Gastrocnemius medialis (tissue), 4 donors: ENCODE measurements at regions of chr7 and their contacts with region 1.

Region 1: GRCh38 chr7:21507626-21508343 is 35.1 kb upstream of the DNAH11 start:
- DNase-seq: no peak
- ATAC-seq: peak in 1 of 2 donors; percentile 75
- H3K4me3 ChIP-seq: no peak overlapping the region
- H3K27ac ChIP-seq: no peak overlapping the region
- H3K4me1 ChIP-seq: no peaks in the 10 kb centered on the region
- H3K27me3 ChIP-seq: no peaks in the 10 kb centered on the region
- CTCF ChIP-seq: peak; percentile 58 to 78 (median 66)
- POLR2A ChIP-seq: no peak

Region 2: DNA sequence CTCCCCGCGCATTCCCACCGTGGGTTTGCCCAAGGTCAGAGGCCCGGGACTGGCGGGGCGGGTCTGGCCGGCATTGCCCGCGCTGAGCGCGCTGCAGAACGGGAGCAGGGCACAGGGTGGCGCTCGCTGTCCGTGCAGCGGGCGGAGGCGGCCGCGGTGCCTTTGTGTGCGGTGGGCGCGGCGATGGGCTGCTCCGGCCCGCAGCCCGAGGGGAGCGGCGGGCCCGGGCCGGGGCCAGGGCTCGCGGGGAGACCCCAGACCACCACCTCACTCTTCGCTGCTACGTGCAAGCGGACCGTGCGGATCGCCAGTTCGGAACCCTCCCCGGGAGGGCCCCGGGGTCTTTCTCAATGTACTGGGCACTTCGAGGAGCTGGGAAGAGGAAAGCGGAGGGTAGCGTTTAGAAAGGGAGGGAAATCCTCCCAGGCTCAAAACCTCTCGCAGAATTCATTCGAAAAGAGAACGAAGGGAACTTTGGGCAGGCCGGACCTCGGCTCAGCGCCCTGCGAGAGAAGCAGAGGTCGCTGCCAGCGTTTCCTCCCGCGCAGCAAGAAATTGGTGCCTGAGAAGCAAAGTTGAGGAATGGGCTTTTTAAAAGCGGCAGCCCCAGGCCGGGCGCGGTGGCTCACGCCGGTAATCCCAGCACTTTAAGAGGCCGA is 729.6 kb before region 1 on chr7:
- in situ Hi-C with region 1: no loop called
- intact Hi-C with region 1: loop called (anchors 10 kb)
- DNase-seq: no peak
- ATAC-seq: peak in 1 of 2 donors; percentile 66
- H3K4me3 ChIP-seq: peak overlapping the region in 2 of 4 donors; percentile 24 to 32
- H3K27ac ChIP-seq: no peak overlapping the region
- H3K4me1 ChIP-seq: peaks cover 0 to 2% of the 10 kb centered on the region in 2 donors
- H3K27me3 ChIP-seq: peaks cover 82 to 97% (median 95%) of the 10 kb centered on the region in 3 donors
- CTCF ChIP-seq: peak in 3 of 5 experiments; percentile 20 to 60 (median 35)
- POLR2A ChIP-seq: no peak

Region 3: DNA sequence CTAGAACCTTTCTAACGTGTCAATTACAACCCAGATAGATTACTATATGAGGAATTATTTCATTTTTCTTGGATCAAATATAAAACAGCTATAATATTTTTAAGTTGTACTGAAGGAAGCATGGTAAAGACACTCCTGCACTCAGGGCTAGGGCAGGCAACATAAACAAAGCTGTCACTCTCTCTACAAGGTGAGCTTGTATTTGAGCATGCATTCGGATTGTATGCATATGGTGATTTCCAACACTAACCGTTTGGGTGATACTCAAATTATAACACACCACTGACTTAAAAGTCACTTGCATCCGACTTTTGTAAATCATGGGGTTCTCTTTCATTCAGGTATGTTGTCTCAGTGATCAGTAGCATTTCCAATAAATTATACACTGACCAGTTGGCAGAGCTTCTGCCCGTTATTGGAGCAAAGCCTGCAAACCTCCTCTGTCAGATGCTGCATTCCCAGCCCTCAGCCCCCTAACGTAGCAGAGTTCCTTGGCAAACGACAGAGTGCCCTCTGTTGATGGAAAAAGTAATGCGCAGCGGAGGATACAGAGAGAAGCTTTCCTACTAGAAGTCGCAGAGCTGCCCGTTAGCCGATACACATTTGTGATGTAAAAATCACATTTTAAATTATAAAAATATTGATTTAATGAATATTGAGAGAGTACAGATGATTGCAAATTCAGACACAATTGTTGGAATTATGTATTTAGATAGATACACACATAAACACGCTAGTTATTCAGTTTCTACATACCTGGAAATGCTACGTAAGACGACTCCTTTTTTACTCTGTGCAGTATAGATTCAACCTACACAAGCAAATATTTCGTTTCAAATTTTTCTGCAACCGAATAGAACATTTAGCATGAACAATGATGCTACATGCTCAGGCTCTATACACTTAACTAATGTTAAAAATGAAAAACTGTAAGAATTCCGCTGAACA is 253.8 kb before region 1 on chr7:
- in situ Hi-C with region 1: loop called in 3 of 4 experiments (anchors 10 to 25 kb)
- intact Hi-C with region 1: loop called (anchors 2 kb)
- DNase-seq: no peak
- ATAC-seq: no peak
- H3K4me3 ChIP-seq: no peak overlapping the region
- H3K27ac ChIP-seq: no peak overlapping the region
- H3K4me1 ChIP-seq: no peaks in the 10 kb centered on the region
- H3K27me3 ChIP-seq: peaks cover 43 to 52% (median 46%) of the 10 kb centered on the region in 3 donors
- CTCF ChIP-seq: no peak
- POLR2A ChIP-seq: no peak

Region 4: GRCh38 chr7:21261627-21262594 is 245.9 kb before region 1 on chr7:
- in situ Hi-C with region 1: loop called (anchors 10 to 25 kb)
- intact Hi-C with region 1: loop called (anchors 2 kb)
- DNase-seq: no peak
- ATAC-seq: no peak
- H3K4me3 ChIP-seq: no peak overlapping the region
- H3K27ac ChIP-seq: no peak overlapping the region
- H3K4me1 ChIP-seq: no peaks in the 10 kb centered on the region
- H3K27me3 ChIP-seq: peaks cover 0 to under 1% (median 0%) of the 10 kb centered on the region in 3 donors
- CTCF ChIP-seq: peak in 3 of 5 experiments; percentile 18 to 39 (median 28)
- POLR2A ChIP-seq: no peak

Region 5: GRCh38 chr7:21429786-21430574 is 77.8 kb before region 1 on chr7:
- in situ Hi-C with region 1: no loop called
- intact Hi-C with region 1: no loop called
- DNase-seq: no peak
- ATAC-seq: no peak
- H3K4me3 ChIP-seq: peak overlapping the region in 1 of 4 donors; percentile 3
- H3K27ac ChIP-seq: peak overlapping the region in 3 of 4 donors; percentile 14 to 92 (median 14)
- H3K4me1 ChIP-seq: peaks cover 47 to 51% of the 10 kb centered on the region in 2 donors
- H3K27me3 ChIP-seq: no peaks in the 10 kb centered on the region
- CTCF ChIP-seq: no peak
- POLR2A ChIP-seq: no peak